ENCODE measurements at regions of chr10 and their contacts with region 1.

Region 1: GRCh38 chr10:71212318-71213126 is at the start of gene UNC5B:
- DNase-seq: peak; percentile 85 to 93 (median 92)
- H3K4me3 ChIP-seq: peak within 1 kb of the TSS; percentile 49
- H3K27ac ChIP-seq: peak within 1 kb of the TSS; percentile 26 to 39
- H3K4me1 ChIP-seq: peaks cover 9% of the 10 kb centered on the region
- H3K27me3 ChIP-seq: no peaks in the 10 kb centered on the region
- CTCF ChIP-seq: peak in 2 of 3 donors; percentile 62 to 72
- EP300 ChIP-seq: no peak
- POLR2A ChIP-seq: peak; percentile 70
- total RNA-seq, gene UNC5B: 3.7 to 48.0 (median 6.8) TPM

Region 2: DNA sequence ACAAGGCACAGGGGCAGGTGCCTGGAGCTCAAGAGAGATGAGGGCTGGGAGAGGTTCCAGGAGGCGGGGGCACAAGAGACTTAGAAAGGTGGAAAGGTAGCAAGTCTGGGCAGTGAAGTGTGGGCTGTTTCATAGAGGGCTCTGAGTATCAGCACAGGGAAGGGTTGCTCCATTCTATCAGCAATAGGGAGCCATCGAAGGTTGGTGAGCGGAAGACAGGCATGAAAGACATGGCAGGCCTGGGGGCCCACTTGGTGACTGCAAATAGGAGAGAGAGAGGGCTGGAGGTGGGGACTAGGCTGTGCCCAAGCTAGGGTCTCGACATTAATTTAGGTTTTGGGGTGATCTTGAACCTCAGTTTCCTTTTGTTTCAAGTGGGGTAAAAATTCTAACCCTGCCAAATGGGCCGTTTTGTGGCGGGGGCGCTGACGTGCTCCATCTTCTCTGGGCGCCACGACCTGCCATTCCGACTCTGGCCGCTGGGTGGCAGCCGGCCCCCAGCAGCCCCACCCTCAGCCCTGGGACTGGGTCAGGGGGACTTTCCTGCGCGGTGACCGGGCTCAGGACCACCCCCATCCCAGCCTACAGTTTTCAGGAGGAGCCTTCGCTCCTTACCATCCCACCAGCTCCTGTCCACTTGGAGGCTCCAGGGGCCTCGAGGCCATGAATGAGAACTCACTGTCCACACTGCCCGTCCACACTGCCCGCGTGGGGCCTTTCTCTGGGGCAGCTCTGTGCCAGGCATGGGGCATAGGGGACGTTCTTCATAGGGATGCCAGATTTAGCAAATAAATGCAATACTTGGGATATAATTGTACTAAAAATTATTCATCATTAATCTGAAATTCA is 286.9 kb before region 1 on chr10:
- intact Hi-C with region 1: loop called in 3 of 4 experiments (anchors 10 kb)
- DNase-seq: peak in 4 of 5 donors; percentile 43 to 72 (median 56)
- H3K4me3 ChIP-seq: no peak overlapping the region
- H3K27ac ChIP-seq: no peak overlapping the region
- H3K4me1 ChIP-seq: no peaks in the 10 kb centered on the region
- H3K27me3 ChIP-seq: no peaks in the 10 kb centered on the region
- CTCF ChIP-seq: peak; percentile 63 to 83 (median 76)
- EP300 ChIP-seq: no peak
- POLR2A ChIP-seq: no peak

Region 3: DNA sequence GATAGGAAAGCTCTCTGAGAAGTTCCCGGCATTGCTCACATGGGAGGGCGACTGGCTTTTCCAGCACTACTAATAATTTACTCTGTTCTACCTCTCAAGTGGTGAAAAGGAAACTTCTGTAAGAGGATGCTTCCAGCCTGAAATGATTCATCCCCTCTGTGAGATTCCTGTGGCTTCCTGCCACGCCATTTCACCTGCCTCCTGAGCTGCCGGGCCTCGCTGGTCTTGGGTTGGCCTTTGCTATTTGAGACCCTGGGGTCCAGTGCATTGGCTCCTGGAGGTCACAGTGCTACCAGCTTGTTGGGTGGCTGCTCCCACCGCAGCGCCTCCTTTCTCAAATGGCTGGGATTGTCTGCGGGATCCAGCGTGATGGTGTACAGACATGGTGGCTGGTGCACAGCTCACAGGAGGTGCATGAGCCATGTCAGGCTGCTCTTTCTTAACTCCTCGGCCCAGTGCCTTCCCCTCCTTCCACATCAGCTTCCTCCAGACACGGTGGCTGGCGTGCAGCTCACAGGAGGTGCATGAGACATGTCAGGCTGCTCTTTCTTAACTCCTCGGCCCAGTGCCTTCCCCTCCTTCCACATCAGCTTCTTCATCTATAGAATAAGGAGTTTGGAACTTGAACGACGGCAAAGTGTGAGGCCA is 281.2 kb before region 1 on chr10:
- intact Hi-C with region 1: loop called in 3 of 4 experiments (anchors 10 kb)
- DNase-seq: no peak
- H3K4me3 ChIP-seq: no peak overlapping the region
- H3K27ac ChIP-seq: no peak overlapping the region
- H3K4me1 ChIP-seq: no peaks in the 10 kb centered on the region
- H3K27me3 ChIP-seq: no peaks in the 10 kb centered on the region
- CTCF ChIP-seq: no peak
- EP300 ChIP-seq: no peak
- POLR2A ChIP-seq: no peak

Region 4: DNA sequence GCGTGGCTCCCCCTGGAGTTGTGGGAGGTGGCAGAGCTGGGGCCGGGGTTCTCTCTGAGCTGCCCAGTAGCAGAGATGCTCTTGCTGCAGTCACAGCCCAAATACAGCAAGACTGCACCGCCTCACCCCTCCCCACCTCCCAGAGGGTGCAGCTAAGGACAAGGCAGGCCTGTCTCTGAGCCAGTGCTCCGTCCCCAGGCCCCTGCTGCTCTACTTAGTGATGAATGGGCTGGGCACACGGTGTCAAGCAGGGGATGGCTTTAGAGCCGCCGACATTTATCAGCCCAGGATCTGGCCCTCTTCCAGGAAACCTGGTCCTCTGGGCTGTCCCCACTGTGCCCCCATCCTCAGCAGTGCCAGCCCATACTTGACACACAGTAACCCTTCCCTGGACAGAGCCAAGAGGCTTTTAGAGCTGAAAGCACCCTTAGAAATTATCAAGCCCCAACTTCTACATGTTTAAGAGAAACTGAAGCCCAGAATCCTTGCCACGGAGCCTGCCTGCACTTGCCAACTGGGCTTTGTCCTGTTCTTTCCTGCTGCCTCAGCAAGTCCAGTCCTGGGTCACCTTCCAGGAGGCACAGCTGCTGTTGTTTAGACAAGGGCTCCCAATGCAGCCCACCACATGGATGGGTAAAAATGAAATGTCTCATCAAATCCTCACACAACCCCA is 137.3 kb before region 1 on chr10:
- intact Hi-C with region 1: no loop called
- DNase-seq: peak in 3 of 5 donors; percentile 6 to 19 (median 6)
- H3K4me3 ChIP-seq: no peak overlapping the region
- H3K27ac ChIP-seq: no peak overlapping the region
- H3K4me1 ChIP-seq: no peaks in the 10 kb centered on the region
- H3K27me3 ChIP-seq: no peaks in the 10 kb centered on the region
- CTCF ChIP-seq: no peak
- EP300 ChIP-seq: no peak
- POLR2A ChIP-seq: no peak

Region 5: GRCh38 chr10:71268247-71268691 is 55.7 kb after region 1 on chr10:
- intact Hi-C with region 1: loop called in 2 of 4 experiments (anchors 10 kb)
- DNase-seq: no peak
- H3K4me3 ChIP-seq: no peak overlapping the region
- H3K27ac ChIP-seq: no peak overlapping the region
- H3K4me1 ChIP-seq: peaks cover 5% of the 10 kb centered on the region
- H3K27me3 ChIP-seq: no peaks in the 10 kb centered on the region
- CTCF ChIP-seq: no peak
- EP300 ChIP-seq: no peak
- POLR2A ChIP-seq: no peak

Region 6: GRCh38 chr10:71278691-71279588 is 66.4 kb after region 1 on chr10:
- intact Hi-C with region 1: loop called in 2 of 4 experiments (anchors 5 to 10 kb)
- DNase-seq: no peak
- H3K4me3 ChIP-seq: no peak overlapping the region
- H3K27ac ChIP-seq: no peak overlapping the region
- H3K4me1 ChIP-seq: no peaks in the 10 kb centered on the region
- H3K27me3 ChIP-seq: no peaks in the 10 kb centered on the region
- CTCF ChIP-seq: no peak
- EP300 ChIP-seq: no peak
- POLR2A ChIP-seq: no peak

Region 7: DNA sequence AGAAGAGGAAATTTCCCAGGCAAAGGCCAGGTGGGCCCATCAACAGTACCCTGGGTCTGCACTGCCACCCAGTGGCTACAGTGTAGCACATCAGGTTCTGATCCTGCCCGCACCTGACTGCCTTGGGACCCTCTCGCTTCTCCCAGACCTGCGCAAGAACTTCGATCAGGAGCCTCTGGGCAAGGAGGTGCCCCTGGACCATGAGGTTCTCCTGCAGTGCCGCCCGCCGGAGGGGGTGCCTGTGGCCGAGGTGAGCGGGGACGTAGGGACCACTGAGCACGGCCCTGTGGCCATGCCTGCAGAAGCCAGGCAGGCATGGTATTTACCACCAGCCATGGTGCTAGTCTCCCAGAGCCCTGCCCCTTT is 72.6 kb after region 1 on chr10:
- intact Hi-C with region 1: loop called in 1 of 4 experiments (anchors 10 kb)
- DNase-seq: peak; percentile 54 to 78 (median 69)
- H3K4me3 ChIP-seq: no peak overlapping the region
- H3K27ac ChIP-seq: no peak overlapping the region
- H3K4me1 ChIP-seq: no peaks in the 10 kb centered on the region
- H3K27me3 ChIP-seq: no peaks in the 10 kb centered on the region
- CTCF ChIP-seq: peak; percentile 50 to 81 (median 70)
- EP300 ChIP-seq: no peak
- POLR2A ChIP-seq: no peak

Region 8: DNA sequence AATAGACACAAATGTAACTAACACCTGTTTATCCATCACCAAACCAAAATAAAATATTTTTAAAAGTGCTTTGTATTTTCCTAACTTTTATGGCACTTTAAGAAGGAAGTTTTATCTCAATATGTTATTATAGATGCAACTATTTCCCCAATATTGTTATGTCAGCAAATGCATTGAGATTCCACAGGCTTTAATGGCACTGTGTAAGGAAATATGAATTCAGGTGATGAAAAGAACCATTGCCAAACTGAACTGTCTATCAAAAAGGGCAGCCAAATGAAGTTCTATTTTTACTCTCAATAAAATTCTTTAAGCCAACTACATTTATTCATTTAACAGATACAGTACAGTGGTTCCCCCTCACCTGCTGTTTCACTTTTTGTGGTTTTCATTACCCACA is 1613.8 kb after region 1 on chr10:
- intact Hi-C with region 1: loop called in 1 of 4 experiments (anchors 5 kb)
- DNase-seq: no peak
- H3K4me3 ChIP-seq: no peak overlapping the region
- H3K27ac ChIP-seq: no peak overlapping the region
- H3K4me1 ChIP-seq: no peaks in the 10 kb centered on the region
- H3K27me3 ChIP-seq: no peaks in the 10 kb centered on the region
- CTCF ChIP-seq: no peak
- EP300 ChIP-seq: no peak
- POLR2A ChIP-seq: no peak

Measured in ovary (tissue), 10 donors.